ENCODE measurements at regions of chr9 and their contacts with region 1.

Region 1: DNA sequence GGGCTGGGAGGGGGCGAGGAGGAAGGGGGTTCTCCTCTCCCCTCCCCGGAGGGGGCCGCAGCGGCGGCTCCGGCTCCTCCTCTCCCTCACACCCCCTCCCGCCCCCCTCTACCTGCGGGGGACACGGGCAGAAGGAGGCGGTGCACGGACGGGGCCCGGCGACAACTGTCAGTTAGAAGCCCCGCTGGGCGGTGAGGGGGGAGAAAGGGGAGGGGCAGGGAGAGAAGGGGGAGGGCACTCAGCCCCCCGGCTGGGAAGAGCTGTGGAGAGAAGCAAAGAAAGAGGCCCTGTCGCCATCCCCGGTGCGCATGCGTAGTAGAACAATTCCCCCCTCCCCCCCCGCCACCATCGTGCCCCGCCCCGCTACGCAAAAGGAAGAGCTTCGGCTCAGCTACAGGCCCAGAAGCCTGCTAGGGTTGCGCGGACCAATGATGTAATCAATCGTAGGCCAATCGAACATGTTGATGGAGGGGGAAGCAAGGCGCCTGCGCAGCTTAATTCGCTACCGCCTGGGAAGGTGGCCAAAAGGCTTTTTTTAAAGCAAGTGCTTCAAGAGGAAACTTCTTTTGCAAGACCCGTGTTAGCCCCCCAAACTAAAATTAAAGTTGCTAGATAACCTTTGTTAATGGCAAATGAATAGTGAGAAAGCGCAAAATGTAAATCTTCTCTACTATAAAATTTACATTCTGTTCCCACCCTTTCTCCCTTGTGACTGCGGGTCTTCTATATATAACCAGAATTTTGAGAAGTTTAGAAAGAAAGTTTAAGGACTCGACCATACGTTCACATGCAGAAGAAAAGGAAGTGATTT is 7.0 kb downstream of the RANBP6 start:
- H3K4me3 ChIP-seq: peak overlapping the region; percentile 76
- H3K27ac ChIP-seq: peak overlapping the region; percentile 80
- H3K4me1 ChIP-seq: peaks cover 4% of the 10 kb centered on the region; the same call in 1 of the 2 replicates
- CTCF ChIP-seq: no peak

Region 2: GRCh38 chr9:5851445-5851844 is 156.9 kb before region 1 on chr9:
- CTCF ChIA-PET with region 1: no interaction called
- POLR2A ChIA-PET with region 1: no interaction called
- H3K4me3 ChIP-seq: no peak overlapping the region
- H3K27ac ChIP-seq: no peak overlapping the region
- H3K4me1 ChIP-seq: no peaks in the 10 kb centered on the region
- CTCF ChIP-seq: no peak

Region 3: GRCh38 chr9:5879419-5880181 is 128.8 kb before region 1 on chr9:
- CTCF ChIA-PET with region 1: no interaction called
- POLR2A ChIA-PET with region 1: interaction called, 15 read pairs
- H3K4me3 ChIP-seq: peak overlapping the region; percentile 19
- H3K27ac ChIP-seq: no peak overlapping the region
- H3K4me1 ChIP-seq: no peaks in the 10 kb centered on the region
- CTCF ChIP-seq: no peak

Region 4: DNA sequence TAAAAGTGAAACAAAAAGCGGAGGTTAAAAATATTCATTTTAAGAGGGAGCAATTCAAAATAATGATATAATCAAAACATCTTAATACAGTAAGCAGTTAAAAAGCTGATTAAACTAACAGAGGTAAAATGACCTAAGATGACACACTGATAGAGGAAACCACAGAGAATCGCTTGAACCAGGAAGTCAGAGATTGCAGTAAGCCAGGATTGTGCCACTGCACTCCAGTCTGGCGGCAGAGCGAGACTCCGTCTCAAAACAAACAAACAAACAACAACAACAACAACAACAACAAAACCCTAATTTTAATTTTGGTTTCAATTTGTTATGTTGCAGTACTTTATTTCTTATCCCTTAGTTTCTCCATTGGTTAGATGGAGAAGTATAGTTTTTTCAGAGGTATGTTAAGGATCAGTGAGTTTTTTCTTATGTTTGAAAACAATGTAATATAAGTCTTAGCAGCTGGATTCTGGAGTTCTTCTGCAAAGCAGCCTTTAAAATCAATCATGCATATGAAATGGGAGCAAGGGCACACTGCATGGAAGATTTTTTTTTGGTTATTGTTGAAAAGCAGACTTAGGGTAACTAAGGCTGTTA is 59.2 kb before region 1 on chr9:
- CTCF ChIA-PET with region 1: no interaction called
- POLR2A ChIA-PET with region 1: interaction called, 11 read pairs
- H3K4me3 ChIP-seq: no peak overlapping the region
- H3K27ac ChIP-seq: no peak overlapping the region
- H3K4me1 ChIP-seq: peaks cover 9% of the 10 kb centered on the region; the same call in 1 of the 2 replicates
- CTCF ChIP-seq: no peak

Region 5: GRCh38 chr9:6024020-6024554 is 15.7 kb after region 1 on chr9:
- CTCF ChIA-PET with region 1: interaction called, 5 read pairs
- POLR2A ChIA-PET with region 1: interaction called, 11 read pairs
- H3K4me3 ChIP-seq: no peak overlapping the region
- H3K27ac ChIP-seq: no peak overlapping the region
- H3K4me1 ChIP-seq: no peaks in the 10 kb centered on the region
- CTCF ChIP-seq: no peak

Measured in HEK293 (cell line).